Naive thymus-derived CD4-positive, alpha-beta T cell (primary cell): ENCODE measurements at regions of chr5 and their contacts with region 1.

Region 1: GRCh38 chr5:392431-392988 is 50.5 kb upstream of the EXOC3 start:
- DNase-seq: peak in 8 of 9 donors; percentile 34 to 80 (median 65)
- ATAC-seq: peak; percentile 85
- H3K4me3 ChIP-seq: peak overlapping the region; percentile 51
- H3K4me3 Mint-ChIP-seq: peak overlapping the region; percentile 70 to 86 (median 78)
- H3K27ac ChIP-seq: no peak overlapping the region
- H3K27ac Mint-ChIP-seq: peak overlapping the region; percentile 6 to 95 (median 70)
- H3K4me1 ChIP-seq: peaks cover 0 to 8% of the 10 kb centered on the region in 2 donors
- H3K4me1 Mint-ChIP-seq: peaks cover 13 to 38% (median 27%) of the 10 kb centered on the region in 7 donors
- H3K27me3 ChIP-seq: no peaks in the 10 kb centered on the region
- H3K27me3 Mint-ChIP-seq: no peaks in the 10 kb centered on the region

Region 2: DNA sequence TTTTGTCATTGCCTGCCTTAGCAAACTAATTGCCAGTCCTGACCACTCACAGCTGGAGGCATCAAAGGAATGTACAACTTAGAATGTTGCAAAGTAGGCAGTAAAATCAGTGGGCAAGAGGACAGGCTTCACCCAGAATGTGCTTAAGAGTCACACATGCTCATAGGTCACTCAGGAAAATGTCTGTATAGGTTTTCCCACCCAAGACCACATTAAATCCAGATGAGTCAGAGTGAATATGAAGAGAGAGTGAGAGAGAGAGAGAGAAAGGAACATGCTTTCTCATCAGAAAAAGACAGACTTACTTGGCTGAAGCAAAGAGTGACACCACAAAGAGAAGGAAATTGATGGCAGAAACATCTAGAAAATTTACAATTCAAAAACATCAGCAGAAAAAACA is 262.7 kb before region 1 on chr5:
- CTCF ChIA-PET with region 1: no interaction called
- POLR2A ChIA-PET with region 1: no interaction called
- intact Hi-C with region 1: no loop called
- DNase-seq: no peak
- ATAC-seq: no peak
- H3K4me3 ChIP-seq: no peak overlapping the region
- H3K4me3 Mint-ChIP-seq: no peak overlapping the region
- H3K27ac ChIP-seq: no peak overlapping the region
- H3K27ac Mint-ChIP-seq: no peak overlapping the region
- H3K4me1 ChIP-seq: no peaks in the 10 kb centered on the region
- H3K4me1 Mint-ChIP-seq: no peaks in the 10 kb centered on the region
- H3K27me3 ChIP-seq: no peaks in the 10 kb centered on the region
- H3K27me3 Mint-ChIP-seq: peaks cover 11 to 51% (median 29%) of the 10 kb centered on the region in 5 donors

Region 3: DNA sequence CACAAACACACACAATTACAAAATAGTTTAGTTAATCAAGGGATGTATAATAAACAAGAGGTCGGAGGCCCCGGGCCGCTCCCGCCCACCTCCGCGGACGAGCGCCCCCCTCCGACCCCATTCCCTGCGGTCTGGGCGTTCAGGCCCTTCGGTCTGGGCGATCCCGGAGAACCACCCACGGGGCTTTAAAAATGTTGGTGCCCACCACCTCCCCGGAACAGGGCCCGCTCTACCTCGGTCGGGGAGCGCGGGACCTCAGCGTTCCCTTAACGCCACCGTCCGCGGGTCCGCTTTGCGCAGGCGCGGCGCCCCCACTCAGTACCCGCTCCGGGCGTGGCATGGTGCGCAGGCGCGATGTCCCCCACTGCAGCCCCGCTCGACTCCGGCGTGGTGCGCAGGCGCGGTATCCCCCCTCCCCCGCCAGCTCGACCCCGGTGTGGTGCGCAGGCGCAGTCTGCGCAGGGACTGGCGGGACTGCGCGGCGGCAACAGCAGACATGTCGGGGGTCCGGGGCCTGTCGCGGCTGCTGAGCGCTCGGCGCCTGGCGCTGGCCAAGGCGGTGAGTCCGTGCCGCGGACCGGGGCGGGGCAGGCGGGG is 174.6 kb before region 1 on chr5 and contains the starts of genes CCDC127 and SDHA:
- CTCF ChIA-PET with region 1: no interaction called
- POLR2A ChIA-PET with region 1: no interaction called
- intact Hi-C with region 1: loop called in 1 of 2 experiments (anchors 2 kb)
- DNase-seq: peak; percentile 94 to 100 (median 98)
- ATAC-seq: peak; percentile 90
- H3K4me3 ChIP-seq: peak within 1 kb of the TSS; percentile 65
- H3K4me3 Mint-ChIP-seq: peak within 1 kb of the TSS; percentile 93 to 97 (median 96)
- H3K27ac ChIP-seq: peak within 1 kb of the TSS; percentile 92
- H3K27ac Mint-ChIP-seq: peak within 1 kb of the TSS; percentile 87 to 97 (median 95)
- H3K4me1 ChIP-seq: peaks cover 13 to 14% of the 10 kb centered on the region in 2 donors
- H3K4me1 Mint-ChIP-seq: peaks cover 44 to 69% (median 57%) of the 10 kb centered on the region in 7 donors
- H3K27me3 ChIP-seq: no peaks in the 10 kb centered on the region
- H3K27me3 Mint-ChIP-seq: peaks cover 0 to 2% (median 0%) of the 10 kb centered on the region in 5 donors
- total RNA-seq, gene CCDC127: 2.9 to 9.7 (median 6.5) TPM
- total RNA-seq, gene SDHA: 120 to 180 (median 148) TPM

Region 4: DNA sequence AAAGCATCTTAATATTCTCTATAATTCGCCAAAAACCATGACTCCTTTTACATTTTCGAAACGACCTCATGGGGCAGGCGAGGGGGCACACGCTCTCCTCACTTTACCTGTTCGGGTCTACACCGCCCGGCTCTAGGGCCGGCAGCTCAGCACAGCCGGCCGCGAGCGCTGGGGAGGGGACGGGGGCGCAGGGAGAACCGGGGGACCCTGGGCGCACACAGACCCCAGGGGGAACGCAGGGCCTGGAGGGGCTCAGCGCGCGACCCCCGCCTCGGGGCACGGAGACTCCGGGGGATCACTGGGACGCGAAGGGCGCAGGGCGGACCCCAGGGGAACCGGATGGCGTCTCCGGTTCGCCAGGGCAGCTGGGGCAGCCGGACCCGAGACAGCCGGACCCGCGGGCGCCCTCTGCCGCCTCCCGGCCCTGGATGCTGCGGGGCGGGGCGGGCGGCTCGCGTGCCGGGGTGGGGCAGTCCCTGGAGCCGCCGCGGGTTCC is 71.2 kb before region 1 on chr5 and contains the start of gene AHRR:
- CTCF ChIA-PET with region 1: no interaction called
- POLR2A ChIA-PET with region 1: no interaction called
- intact Hi-C with region 1: loop called in 1 of 2 experiments (anchors 2 kb)
- DNase-seq: peak in 1 of 9 donors; percentile 86
- ATAC-seq: peak; percentile 48
- H3K4me3 ChIP-seq: no peak within 1 kb of the TSS
- H3K4me3 Mint-ChIP-seq: peak within 1 kb of the TSS in 9 of 10 donors; percentile 42 to 85 (median 69)
- H3K27ac ChIP-seq: no peak within 1 kb of the TSS
- H3K27ac Mint-ChIP-seq: peak within 1 kb of the TSS in 1 of 9 donors; percentile 55
- H3K4me1 ChIP-seq: no peaks in the 10 kb centered on the region
- H3K4me1 Mint-ChIP-seq: peaks cover 0 to 21% (median 12%) of the 10 kb centered on the region in 7 donors
- H3K27me3 ChIP-seq: no peaks in the 10 kb centered on the region
- H3K27me3 Mint-ChIP-seq: peaks cover 19 to 37% (median 30%) of the 10 kb centered on the region in 5 donors
- total RNA-seq, gene AHRR: 0.56 to 23.5 (median 1.4) TPM

Region 5: DNA sequence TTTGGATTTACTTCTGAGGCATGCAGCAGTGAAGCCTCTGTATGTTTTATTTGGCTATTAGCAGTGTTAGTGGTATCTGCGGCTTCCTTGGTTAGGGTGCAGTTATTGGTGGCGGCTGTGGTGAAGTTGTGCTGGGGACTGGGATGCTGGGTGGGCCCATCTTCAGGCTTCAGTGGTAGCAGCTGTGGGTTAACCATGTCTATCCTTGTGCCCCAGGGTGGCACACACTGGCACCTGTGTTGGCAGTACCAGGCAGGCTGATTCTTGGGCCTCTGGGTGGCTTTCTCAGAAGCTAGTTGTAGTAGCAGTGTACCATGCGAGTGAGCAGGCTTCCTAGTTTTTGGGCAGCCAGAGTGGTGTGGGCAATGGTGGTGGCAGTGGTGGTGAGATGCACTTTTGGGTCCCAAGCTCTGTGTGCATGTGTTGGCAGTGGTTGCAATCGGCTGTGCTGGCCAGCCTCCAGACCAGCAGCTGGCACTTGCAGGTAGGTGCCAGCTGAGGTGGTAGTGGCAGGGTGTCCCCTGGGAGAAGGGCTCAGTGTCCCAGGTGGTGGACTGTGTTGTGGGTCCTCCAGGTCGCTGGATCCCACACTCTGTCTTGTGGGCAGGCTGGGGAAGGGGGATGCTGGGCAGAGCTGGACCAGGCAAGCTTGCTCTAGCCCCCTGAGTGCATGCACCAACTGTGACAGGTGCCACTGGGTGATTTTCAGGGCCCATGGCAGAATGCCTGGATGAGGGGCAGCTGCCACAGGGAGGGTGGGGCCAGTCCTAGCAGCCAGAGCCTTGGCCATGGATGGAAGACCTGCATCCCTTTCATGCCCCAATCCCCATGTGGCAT is 57.4 kb before region 1 on chr5:
- CTCF ChIA-PET with region 1: no interaction called
- POLR2A ChIA-PET with region 1: no interaction called
- intact Hi-C with region 1: loop called in 1 of 2 experiments (anchors 1 kb)
- DNase-seq: no peak
- ATAC-seq: no peak
- H3K4me3 ChIP-seq: no peak overlapping the region
- H3K4me3 Mint-ChIP-seq: peak overlapping the region in 2 of 10 donors; percentile 9 to 70
- H3K27ac ChIP-seq: no peak overlapping the region
- H3K27ac Mint-ChIP-seq: peak overlapping the region in 1 of 9 donors; percentile 82
- H3K4me1 ChIP-seq: no peaks in the 10 kb centered on the region
- H3K4me1 Mint-ChIP-seq: peaks cover 0 to 60% (median 0%) of the 10 kb centered on the region in 7 donors
- H3K27me3 ChIP-seq: no peaks in the 10 kb centered on the region
- H3K27me3 Mint-ChIP-seq: peaks cover 0 to 10% (median 0%) of the 10 kb centered on the region in 5 donors

Region 6: GRCh38 chr5:368183-369084 is 24.1 kb before region 1 on chr5:
- CTCF ChIA-PET with region 1: no interaction called
- POLR2A ChIA-PET with region 1: no interaction called
- intact Hi-C with region 1: no loop called
- DNase-seq: peak in 1 of 9 donors; percentile 26
- ATAC-seq: peak; percentile 55
- H3K4me3 ChIP-seq: no peak overlapping the region
- H3K4me3 Mint-ChIP-seq: peak overlapping the region in 7 of 10 donors; percentile 6 to 65 (median 47)
- H3K27ac ChIP-seq: no peak overlapping the region
- H3K27ac Mint-ChIP-seq: peak overlapping the region in 1 of 9 donors; percentile 50
- H3K4me1 ChIP-seq: peaks cover 0 to 14% of the 10 kb centered on the region in 2 donors
- H3K4me1 Mint-ChIP-seq: peaks cover 13 to 51% (median 20%) of the 10 kb centered on the region in 7 donors
- H3K27me3 ChIP-seq: peaks cover 0 to 2% of the 10 kb centered on the region in 2 donors
- H3K27me3 Mint-ChIP-seq: peaks cover 0 to 36% (median 13%) of the 10 kb centered on the region in 5 donors

Region 7: DNA sequence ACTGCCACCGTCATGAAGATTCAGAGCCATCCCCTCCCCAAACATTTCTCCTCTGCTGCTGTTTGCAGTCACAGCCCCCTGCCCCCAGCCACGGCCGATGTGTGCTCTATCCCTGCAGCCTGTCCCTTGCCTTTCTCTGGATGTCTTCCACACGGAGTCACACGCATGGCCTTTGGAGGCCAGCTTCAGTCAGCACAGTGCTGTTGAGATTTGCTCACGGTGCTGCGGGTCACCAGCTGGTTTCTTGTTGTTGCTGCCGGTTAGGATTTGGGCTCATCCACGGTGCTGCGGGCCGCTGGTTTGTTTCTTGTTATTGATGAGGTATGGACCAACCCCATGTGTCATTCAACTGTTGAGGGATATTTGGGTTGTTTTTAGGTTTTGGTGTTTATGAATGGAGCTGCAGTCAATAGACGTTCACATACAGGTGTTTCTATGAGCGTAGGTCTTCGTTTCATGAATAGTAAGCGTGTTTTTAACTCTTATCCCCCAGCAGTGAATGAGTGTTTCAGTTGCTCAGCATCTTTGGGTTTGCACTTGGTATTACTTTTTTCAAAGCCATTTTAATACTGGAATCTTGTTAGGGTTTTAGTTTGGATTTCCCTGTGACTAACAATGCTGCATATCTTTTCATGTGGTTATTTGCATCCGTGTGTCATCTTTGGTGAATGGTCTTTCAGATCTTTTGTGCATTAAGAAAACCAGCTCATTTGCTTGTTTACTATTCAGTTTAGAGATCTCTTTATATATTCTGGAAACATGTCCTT is 13.4 kb before region 1 on chr5:
- CTCF ChIA-PET with region 1: no interaction called
- POLR2A ChIA-PET with region 1: no interaction called
- intact Hi-C with region 1: loop called in 1 of 2 experiments (anchors 1 kb)
- DNase-seq: peak in 1 of 9 donors; percentile 27
- ATAC-seq: no peak
- H3K4me3 ChIP-seq: no peak overlapping the region
- H3K4me3 Mint-ChIP-seq: peak overlapping the region in 1 of 10 donors; percentile 74
- H3K27ac ChIP-seq: no peak overlapping the region
- H3K27ac Mint-ChIP-seq: peak overlapping the region in 1 of 9 donors; percentile 77
- H3K4me1 ChIP-seq: no peaks in the 10 kb centered on the region
- H3K4me1 Mint-ChIP-seq: peaks cover 0 to 69% (median 6%) of the 10 kb centered on the region in 7 donors
- H3K27me3 ChIP-seq: no peaks in the 10 kb centered on the region
- H3K27me3 Mint-ChIP-seq: peaks cover 0 to 6% (median 3%) of the 10 kb centered on the region in 5 donors